Activated CD4-positive, alpha-beta T cell treated with anti-CD3 and anti-CD28 coated beads for 36 hours (primary cell): ENCODE measurements at regions of chr17 and their contacts with region 1.

Region 1: GRCh38 chr17:17681187-17681848 is at the start of gene RAI1:
- DNase-seq: peak; percentile 84
- ATAC-seq: peak; percentile 63
- H3K4me3 Mint-ChIP-seq: peak within 1 kb of the TSS; percentile 86
- H3K27ac Mint-ChIP-seq: peak within 1 kb of the TSS; percentile 86
- H3K4me1 Mint-ChIP-seq: peaks cover 27% of the 10 kb centered on the region
- H3K27me3 Mint-ChIP-seq: no peaks in the 10 kb centered on the region
- total RNA-seq, gene RAI1: 13.6 to 16.4 TPM

Region 2: DNA sequence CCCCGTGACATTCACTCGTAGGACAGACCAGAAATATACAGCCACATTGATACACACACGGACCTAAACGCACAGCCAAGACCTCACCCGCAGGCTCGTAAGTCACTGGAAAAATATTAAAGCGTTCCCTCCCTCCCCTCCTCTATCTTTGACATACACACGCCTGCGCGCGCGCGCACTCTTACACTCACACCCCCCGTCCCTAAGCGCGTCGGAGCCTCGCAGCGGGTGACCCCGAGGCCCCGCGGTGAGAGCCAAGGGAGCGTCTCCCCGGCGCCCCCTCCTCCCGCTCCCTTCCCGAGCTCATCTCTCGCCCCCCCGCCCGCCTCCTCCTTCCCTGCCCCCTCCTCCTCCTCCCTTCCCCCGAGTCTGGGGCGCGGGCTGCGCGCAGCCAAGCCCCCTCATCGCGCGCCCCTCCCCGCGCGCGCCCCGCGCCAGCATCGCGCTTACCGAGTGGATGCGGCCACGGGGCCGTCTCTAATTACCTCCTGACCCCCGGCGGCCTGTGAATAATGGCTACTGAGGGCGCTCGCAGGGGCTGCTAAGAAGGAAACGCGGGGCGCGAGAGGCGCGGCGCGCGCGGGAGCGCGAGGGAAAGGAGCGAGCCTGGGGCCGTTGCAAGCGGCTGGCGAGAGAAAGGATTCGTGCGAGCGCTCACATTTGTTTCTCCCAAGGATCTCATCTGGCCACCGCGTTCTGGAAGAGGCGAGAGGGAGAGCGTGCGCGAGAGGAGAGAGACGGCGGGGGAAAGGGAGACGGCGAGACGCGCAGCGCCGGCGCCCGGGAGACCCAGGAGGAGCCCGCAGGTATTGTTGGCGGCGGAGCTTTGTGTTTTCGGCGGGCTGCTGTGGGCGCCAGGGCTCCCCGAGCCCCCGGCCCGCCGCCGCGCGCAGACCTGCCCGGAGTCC is 42.3 kb after region 1 on chr17:
- CTCF ChIA-PET with region 1: interaction called, 5 read pairs
- POLR2A ChIA-PET with region 1: no interaction called
- intact Hi-C with region 1: loop called (anchors 2 kb)
- DNase-seq: peak; percentile 64
- ATAC-seq: peak; percentile 69
- H3K4me3 Mint-ChIP-seq: peak overlapping the region; percentile 73
- H3K27ac Mint-ChIP-seq: peak overlapping the region; percentile 19
- H3K4me1 Mint-ChIP-seq: peaks cover 40% of the 10 kb centered on the region
- H3K27me3 Mint-ChIP-seq: peaks cover 24% of the 10 kb centered on the region

Region 3: DNA sequence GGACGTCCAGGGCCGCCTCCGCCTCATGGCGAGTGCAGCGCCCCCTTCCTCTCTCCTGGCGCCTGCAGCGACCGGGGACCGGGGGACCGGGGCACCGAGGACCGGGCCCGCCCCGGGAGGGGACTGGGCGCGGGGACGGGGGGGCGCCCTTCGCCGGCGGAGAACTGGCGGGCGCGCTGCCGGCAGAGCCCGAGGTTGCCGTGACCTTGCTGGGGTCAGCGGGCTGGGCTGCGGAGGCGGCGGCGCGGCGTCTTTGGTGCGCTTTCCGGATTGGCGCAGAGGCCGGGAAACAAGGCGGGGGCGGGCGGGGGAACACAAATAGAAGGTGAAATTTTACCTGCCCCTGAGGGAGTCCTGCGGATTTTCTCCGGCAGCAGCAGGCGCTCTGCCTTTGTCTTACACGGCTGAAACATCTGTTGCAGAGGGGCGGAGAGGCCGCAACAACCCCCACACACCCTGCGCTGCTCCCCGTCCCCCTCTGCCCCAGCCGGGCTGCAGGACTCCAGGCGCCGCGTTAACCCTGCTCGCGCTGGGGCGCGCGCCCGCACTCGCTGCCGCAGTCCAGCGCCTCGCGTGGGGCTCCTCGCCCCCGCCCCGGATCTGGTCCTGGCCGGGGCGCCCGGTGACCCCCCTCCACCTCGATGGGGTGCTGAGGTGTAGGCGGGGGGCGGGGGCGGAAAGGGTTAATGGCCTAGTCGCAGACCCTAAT is 102.0 kb after region 1 on chr17:
- CTCF ChIA-PET with region 1: interaction called, 4 read pairs
- POLR2A ChIA-PET with region 1: no interaction called
- intact Hi-C with region 1: loop called (anchors 1 to 2 kb)
- DNase-seq: peak; percentile 78
- ATAC-seq: peak; percentile 58
- H3K4me3 Mint-ChIP-seq: peak overlapping the region; percentile 55
- H3K27ac Mint-ChIP-seq: no peak overlapping the region
- H3K4me1 Mint-ChIP-seq: peaks cover 18% of the 10 kb centered on the region
- H3K27me3 Mint-ChIP-seq: no peaks in the 10 kb centered on the region

Region 4: DNA sequence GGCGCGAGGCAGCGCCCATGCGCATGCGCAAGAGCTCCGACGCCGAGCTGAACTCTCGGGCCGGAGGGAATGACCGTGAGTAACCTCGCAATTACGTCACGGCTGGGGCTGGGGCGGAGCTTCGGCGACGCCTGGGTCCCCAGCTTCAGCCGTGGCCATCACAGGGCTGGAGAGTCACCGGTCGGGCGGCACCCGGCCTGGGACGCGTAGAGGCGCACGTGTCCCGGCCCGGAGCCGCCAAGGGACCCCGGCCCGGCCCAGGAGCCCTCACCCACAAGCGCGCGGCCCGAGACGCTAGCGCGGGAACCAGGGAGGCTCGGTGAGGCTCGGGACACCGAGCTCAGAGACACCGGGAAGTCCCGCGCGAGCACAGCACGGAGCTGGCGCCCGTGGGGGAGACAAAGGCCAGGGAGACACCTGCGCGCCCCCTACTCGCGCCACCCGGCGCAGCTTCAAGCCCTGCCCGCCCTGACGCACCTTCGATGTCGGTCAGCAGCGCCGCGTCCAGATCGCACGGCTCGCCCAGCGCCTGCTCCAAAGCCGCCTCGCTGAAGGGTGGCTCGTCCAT is 155.0 kb after region 1 on chr17:
- CTCF ChIA-PET with region 1: interaction called, 4 read pairs
- POLR2A ChIA-PET with region 1: interaction called, 4 read pairs
- intact Hi-C with region 1: loop called in 1 of 2 experiments (anchors 5 kb)
- DNase-seq: peak; percentile 99
- ATAC-seq: peak; percentile 74
- H3K4me3 Mint-ChIP-seq: peak overlapping the region; percentile 94
- H3K27ac Mint-ChIP-seq: peak overlapping the region; percentile 98
- H3K4me1 Mint-ChIP-seq: peaks cover 74% of the 10 kb centered on the region
- H3K27me3 Mint-ChIP-seq: no peaks in the 10 kb centered on the region

Region 5: DNA sequence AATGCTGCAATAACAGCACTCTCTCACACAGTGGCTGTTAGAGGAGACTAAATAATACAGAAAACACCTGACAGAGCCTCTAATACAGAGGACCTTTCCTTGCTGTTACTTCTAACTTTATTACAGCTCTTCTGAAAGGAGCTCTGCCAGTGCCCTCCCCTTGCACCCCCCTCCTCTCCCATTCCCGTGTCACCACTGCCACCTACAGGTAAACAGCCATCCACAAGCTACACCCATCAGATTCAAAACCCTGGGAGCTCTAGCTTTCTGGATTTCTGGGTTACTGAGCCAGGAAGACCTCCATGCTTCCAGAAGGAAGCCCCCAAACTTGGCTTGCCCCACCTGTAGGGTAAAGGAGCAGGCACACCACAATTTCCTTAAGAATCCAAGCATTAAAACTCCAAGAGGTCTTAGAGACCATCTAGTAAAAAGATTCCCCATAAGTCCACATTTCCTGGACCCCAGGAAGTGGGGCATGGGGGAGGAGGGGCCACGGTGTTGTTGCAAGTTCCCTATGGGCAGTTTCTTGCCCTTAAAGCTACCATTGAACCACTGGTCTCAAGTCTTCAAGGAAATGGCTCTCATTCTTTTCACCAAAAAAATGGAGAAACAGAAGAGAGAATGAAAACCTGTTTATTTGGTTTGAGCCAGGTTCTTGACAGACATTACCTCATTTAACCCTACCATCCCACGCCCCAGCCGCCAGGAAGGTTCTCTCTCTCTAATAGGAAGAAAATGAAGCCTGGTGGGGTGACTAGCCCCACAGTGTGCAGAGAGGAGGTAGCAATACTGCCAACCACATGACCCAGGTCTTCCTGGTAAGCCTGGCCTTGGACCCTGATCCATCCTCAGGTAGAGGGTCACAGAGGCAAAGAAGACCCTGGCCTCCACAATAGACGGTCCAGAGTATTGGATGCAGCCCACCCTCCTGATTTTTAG is 238.1 kb after region 1 on chr17:
- CTCF ChIA-PET with region 1: interaction called, 5 read pairs
- POLR2A ChIA-PET with region 1: no interaction called
- intact Hi-C with region 1: loop called (anchors 1 to 5 kb)
- DNase-seq: peak; percentile 81
- ATAC-seq: peak; percentile 95
- H3K4me3 Mint-ChIP-seq: no peak overlapping the region
- H3K27ac Mint-ChIP-seq: no peak overlapping the region
- H3K4me1 Mint-ChIP-seq: peaks cover 11% of the 10 kb centered on the region
- H3K27me3 Mint-ChIP-seq: no peaks in the 10 kb centered on the region

Region 6: DNA sequence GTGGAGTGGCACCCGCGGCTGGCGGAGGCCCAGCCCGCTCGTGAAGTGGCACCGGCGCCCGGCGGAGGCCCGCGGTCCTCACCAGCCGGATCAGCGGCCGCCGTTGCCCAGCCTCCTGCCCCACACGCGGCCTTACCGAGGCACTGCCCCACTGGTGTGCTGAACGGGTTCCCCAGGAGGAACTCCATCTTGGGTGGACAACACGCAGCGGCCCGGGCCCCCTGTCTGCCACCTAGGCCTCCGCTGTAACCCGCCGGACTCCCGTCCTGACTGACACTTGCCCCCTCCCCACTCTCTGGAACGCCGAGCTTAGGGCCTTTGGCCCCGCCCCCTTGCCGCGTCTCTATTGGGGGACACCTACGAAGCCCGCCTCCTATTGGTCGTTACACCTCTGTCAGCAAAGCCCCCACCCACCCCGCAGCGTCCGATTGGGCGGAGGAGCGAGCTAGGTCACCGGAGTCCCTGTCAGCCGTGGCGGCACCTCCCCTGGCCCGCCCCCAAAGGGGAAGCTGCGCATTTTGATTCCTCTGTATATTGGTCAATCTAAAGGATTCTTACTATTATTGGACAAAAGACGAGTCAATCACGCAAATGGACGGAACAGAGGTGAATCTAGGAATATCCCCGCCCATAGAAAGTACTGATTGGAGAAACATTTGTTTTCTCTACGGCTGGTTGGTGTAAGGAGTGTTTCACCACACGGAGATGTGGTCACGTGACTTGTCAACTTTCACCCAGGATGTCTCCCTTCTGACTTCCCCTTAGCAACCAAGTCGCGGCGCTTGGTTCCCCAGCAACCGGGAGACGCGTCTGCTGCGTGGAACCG is 291.0 kb after region 1 on chr17 and contains the starts of genes DRC3 and TOM1L2:
- CTCF ChIA-PET with region 1: no interaction called
- POLR2A ChIA-PET with region 1: interaction called, 3 read pairs
- intact Hi-C with region 1: loop called in 1 of 2 experiments (anchors 1 kb)
- DNase-seq: peak; percentile 100
- ATAC-seq: peak; percentile 97
- H3K4me3 Mint-ChIP-seq: peak within 1 kb of the TSS; percentile 86
- H3K27ac Mint-ChIP-seq: peak within 1 kb of the TSS; percentile 76
- H3K4me1 Mint-ChIP-seq: peaks cover 37% of the 10 kb centered on the region
- H3K27me3 Mint-ChIP-seq: no peaks in the 10 kb centered on the region
- total RNA-seq, gene DRC3: 0.11 to 0.18 TPM
- total RNA-seq, gene TOM1L2: 11.3 to 11.9 TPM

Region 7: DNA sequence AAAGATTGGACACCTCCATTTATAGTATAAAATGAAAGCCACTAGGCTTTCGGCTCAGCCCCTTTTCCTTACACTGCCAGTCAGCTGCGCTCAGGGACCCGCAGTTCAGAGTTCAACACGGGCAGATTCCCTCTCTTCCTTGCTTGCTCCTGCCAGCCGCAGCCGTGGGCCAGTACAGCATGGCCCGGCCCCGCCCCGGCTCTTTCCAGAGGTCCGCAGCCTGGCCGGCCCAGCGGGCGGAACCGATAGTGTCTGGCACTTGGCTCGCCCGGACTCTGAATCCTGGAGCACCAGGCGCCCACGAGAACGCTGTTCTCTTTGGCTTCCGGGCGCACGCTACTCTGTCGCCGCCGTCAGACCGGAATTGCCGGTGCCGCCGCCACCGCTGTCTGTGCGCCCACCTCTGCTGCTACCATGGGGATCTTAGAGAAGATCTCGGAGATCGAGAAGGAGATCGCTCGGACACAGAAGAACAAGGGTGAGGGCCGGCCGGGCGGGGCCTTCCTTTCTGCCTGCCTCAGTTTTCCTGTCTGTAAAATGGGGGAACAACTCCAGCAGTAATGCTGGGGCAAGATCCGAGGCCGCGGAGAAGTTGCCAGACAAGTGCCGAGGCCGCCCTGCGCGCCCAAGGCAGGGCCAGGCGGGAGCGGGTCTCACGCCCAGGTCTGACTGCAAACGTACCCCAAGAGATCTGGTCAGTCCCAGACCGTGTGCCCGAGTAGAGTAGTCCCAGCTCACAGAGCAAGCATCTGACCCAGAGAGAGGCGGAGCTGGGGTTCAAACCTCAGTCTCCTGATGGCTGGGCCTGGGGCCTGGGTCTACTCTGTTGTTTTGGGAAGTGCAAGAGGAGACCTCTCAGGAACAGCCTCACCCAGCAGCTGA is 406.5 kb after region 1 on chr17 and contains the start of gene DRG2:
- CTCF ChIA-PET with region 1: no interaction called
- POLR2A ChIA-PET with region 1: no interaction called
- intact Hi-C with region 1: loop called in 1 of 2 experiments (anchors 5 kb)
- DNase-seq: peak; percentile 93
- ATAC-seq: peak; percentile 90
- H3K4me3 Mint-ChIP-seq: peak within 1 kb of the TSS; percentile 99
- H3K27ac Mint-ChIP-seq: peak within 1 kb of the TSS; percentile 98
- H3K4me1 Mint-ChIP-seq: peaks cover 22% of the 10 kb centered on the region
- H3K27me3 Mint-ChIP-seq: no peaks in the 10 kb centered on the region
- total RNA-seq, gene DRG2: 42.5 to 45.6 TPM